WTC11 (cell line): ENCODE measurements at regions of chr5 and their contacts with region 1.

Region 1: GRCh38 chr5:181260387-181261319 is at the start of gene TRIM52:
- DNase-seq: peak; percentile 95
- ATAC-seq: peak; percentile 79
- H3K4me3 Mint-ChIP-seq: peak within 1 kb of the TSS; percentile 95
- H3K27ac Mint-ChIP-seq: peak within 1 kb of the TSS; percentile 70
- H3K4me1 Mint-ChIP-seq: peaks cover 28% of the 10 kb centered on the region
- H3K27me3 Mint-ChIP-seq: no peaks in the 10 kb centered on the region
- CTCF ChIP-seq: no peak
- total RNA-seq, gene TRIM52: 7.8 to 10.1 TPM (median 8.7 TPM) in 3 replicates

Region 2: DNA sequence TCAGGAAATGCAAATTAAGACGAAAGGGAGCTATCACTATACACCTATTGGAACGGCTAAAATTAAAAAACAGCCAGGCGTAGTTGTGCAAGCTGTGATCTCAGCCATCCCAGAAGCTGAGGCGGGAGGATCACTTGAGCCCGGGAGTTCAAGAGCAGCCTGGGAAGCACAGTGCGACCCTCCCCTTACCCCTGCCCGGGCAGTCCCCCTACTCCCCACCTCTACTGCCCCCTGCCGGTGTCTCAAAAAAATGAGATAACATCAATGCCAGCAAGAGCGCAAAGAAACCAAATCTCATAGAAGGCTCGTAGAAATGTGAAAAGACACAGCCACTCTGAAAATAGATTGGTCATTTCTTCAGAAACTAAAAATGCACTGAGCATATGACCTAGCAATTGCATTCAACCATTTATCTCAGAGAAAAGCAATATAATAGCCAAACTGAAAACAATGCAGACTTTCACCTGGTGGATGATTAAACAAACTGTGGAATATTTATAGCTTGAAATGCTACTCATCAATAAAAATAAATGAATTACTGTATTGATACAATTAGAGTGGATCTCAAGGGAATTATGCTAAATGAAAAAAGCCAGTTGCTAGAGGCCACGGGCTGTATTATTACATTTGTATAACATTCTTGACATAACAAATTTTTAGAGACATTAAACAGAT is 92.7 kb before region 1 on chr5:
- CTCF ChIA-PET with region 1: interaction called, 10 read pairs
- POLR2A ChIA-PET with region 1: no interaction called
- DNase-seq: peak; percentile 90
- ATAC-seq: peak; percentile 22
- H3K4me3 Mint-ChIP-seq: peak overlapping the region; percentile 84
- H3K27ac Mint-ChIP-seq: no peak overlapping the region
- H3K4me1 Mint-ChIP-seq: peaks cover 28% of the 10 kb centered on the region
- H3K27me3 Mint-ChIP-seq: peaks cover 59% of the 10 kb centered on the region
- CTCF ChIP-seq: peak; percentile 69

Region 3: GRCh38 chr5:181233436-181234115 is 27.1 kb before region 1 on chr5:
- CTCF ChIA-PET with region 1: no interaction called
- POLR2A ChIA-PET with region 1: no interaction called
- DNase-seq: no peak
- ATAC-seq: peak; percentile 2
- H3K4me3 Mint-ChIP-seq: no peak overlapping the region
- H3K27ac Mint-ChIP-seq: no peak overlapping the region
- H3K4me1 Mint-ChIP-seq: peaks cover 10% of the 10 kb centered on the region; the same call in 1 of the 2 replicates
- H3K27me3 Mint-ChIP-seq: no peaks in the 10 kb centered on the region
- CTCF ChIP-seq: no peak

Region 4: DNA sequence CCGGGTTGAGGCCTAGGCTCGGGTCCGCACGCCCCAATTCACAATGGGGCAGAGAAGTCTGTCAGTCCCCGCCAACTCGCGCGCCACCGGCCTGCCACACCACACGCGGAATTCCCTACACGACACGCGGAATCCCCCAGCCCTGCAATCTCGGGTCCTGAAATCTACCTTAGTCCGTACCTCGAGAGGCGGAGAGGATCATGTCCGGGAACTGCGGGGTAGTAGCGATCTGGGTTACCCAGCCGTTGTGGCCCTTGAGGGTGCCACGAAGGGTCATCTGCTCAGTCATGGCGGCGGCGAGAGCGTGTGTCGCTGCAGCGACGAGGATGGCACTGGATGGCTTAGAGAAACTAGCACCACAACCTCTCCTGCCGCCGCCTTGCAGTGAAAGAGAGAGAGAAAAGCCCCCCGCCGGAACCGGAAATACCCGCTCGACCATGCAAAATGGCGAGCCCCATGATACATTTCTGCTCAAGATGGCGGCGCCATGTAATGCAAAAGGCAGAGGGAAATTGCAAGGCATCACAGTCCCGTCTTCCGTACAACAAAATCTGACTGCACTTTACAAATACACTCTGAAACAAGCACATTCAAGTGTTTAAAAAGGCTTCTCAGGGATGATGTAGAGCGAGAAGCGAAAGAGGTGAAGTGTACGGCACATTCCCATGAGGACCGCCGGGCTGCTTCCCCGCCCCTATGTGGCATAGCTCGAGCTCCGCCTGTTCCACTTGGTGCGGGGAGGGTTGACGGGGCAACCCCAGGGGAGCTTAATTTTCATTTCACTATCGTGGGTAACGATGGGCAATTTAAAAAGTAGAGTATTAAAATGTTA is 16.9 kb before region 1 on chr5 and contains the start of gene RACK1:
- CTCF ChIA-PET with region 1: interaction called, 6 read pairs
- POLR2A ChIA-PET with region 1: interaction called, 24 read pairs
- DNase-seq: peak; percentile 86
- ATAC-seq: peak; percentile 41
- H3K4me3 Mint-ChIP-seq: peak within 1 kb of the TSS; percentile 99
- H3K27ac Mint-ChIP-seq: peak within 1 kb of the TSS; percentile 100
- H3K4me1 Mint-ChIP-seq: peaks cover 46% of the 10 kb centered on the region
- H3K27me3 Mint-ChIP-seq: no peaks in the 10 kb centered on the region; the same call in 1 of the 2 replicates
- CTCF ChIP-seq: no peak
- total RNA-seq, gene RACK1: 2,360 to 2,535 TPM (median 2,479 TPM) in 3 replicates

Region 5: GRCh38 chr5:181281077-181281983 is 20.7 kb after region 1 on chr5:
- CTCF ChIA-PET with region 1: no interaction called
- POLR2A ChIA-PET with region 1: interaction called, 12 read pairs
- DNase-seq: peak; percentile 79
- ATAC-seq: peak; percentile 87
- H3K4me3 Mint-ChIP-seq: no peak overlapping the region
- H3K27ac Mint-ChIP-seq: peak overlapping the region; percentile 95
- H3K4me1 Mint-ChIP-seq: peaks cover 10% of the 10 kb centered on the region
- H3K27me3 Mint-ChIP-seq: peaks cover 7% of the 10 kb centered on the region
- CTCF ChIP-seq: no peak